WTC11 (cell line): ENCODE measurements at regions of chr19 and their contacts with region 1.

Region 1: DNA sequence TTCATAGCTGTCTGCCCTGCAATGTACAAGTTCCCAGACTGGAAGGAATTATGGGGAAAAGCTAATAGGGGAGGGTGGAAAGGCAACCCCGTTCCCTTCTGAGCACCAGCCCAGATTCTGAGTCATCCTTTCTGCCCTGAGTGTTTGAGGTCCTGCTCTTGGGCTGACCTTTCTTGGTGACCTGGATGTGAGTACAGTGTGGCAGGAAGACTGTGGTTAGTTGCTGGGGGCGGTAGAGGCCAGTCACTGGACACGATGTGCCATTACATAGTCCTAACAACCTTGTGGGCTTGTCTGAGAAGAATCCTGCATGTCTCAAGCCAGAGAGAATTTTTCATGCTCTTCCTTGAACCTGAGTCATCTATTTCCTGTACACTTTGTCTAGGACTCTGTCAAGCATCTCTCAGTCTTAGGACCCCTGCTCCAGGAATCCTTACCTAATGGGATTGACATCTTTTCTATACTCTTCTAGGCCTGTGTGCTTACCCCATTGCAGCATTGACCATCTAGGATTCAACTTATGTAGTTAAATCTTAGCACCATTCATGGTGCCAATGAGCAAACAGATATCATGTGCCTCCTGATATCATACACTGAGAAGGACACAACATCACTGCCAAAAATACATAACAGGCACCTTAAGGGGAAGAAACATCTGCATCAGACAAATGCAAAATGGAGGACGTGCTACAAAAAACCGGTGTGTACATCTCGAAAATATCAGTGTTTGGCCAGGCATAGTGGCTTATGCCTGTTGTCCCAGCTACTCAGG is 8.1 kb upstream of the ANGPTL4 start:
- DNase-seq: no peak
- ATAC-seq: no peak
- H3K4me3 Mint-ChIP-seq: no peak overlapping the region
- H3K27ac Mint-ChIP-seq: no peak overlapping the region
- H3K4me1 Mint-ChIP-seq: peaks cover 14% of the 10 kb centered on the region
- H3K27me3 Mint-ChIP-seq: peaks cover 16% of the 10 kb centered on the region
- CTCF ChIP-seq: no peak

Region 2: GRCh38 chr19:8194528-8195267 is 161.1 kb before region 1 on chr19:
- CTCF ChIA-PET with region 1: no interaction called
- POLR2A ChIA-PET with region 1: no interaction called
- DNase-seq: no peak
- ATAC-seq: 0 out of 2 replicates have a peak, but pooled peaks have one; percentile 12
- H3K4me3 Mint-ChIP-seq: no peak overlapping the region
- H3K27ac Mint-ChIP-seq: peak overlapping the region; percentile 87
- H3K4me1 Mint-ChIP-seq: peaks cover 46% of the 10 kb centered on the region
- H3K27me3 Mint-ChIP-seq: no peaks in the 10 kb centered on the region
- CTCF ChIP-seq: no peak

Region 3: DNA sequence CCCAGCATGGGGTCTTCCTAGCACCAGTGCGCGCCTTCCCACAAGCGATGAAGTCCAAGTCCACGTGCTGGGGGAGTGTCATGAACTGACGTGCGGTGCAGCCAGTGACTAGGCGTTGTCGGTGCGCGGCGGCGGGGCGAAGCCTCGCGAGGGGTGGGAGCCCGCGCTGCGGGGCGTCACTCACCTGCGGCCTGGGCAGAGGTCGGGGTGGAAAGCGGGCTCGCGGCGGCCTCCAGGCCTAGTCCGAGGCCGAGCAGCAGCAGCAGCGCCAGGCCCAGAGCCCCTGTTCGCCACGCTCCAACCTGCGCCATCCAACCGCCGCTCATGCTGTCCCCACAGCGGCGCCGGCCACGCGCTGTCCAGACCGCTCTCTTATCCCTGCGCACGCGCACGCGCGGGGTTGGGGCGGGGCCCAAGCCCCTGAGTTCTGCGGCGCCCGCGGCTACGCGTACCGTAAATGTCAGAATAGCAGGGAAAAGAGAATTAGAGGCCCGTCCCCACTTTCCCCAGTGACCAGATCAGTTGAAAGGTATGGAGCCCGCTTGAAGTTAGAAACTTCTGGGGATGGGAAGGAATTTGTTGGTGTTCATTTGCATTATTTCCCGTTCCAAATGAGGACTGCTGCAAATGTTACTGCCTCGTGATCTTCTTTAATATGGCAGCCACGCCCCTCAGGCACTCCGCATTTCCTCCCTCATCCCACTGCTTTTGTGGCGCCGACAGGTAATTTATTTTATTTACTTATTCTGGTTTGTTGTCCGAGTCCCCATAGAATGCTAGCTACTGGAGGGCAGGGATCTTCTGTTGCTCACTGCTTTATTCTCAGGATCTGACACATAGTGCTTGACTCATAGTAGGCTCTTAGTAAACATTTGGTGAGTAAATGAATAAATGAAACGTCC is 47.6 kb before region 1 on chr19 and contains the start of gene CD320:
- CTCF ChIA-PET with region 1: no interaction called
- POLR2A ChIA-PET with region 1: no interaction called
- DNase-seq: peak; percentile 87
- ATAC-seq: peak; percentile 67
- H3K4me3 Mint-ChIP-seq: peak within 1 kb of the TSS; percentile 86
- H3K27ac Mint-ChIP-seq: peak within 1 kb of the TSS; percentile 91
- H3K4me1 Mint-ChIP-seq: peaks cover 33% of the 10 kb centered on the region
- H3K27me3 Mint-ChIP-seq: no peaks in the 10 kb centered on the region
- CTCF ChIP-seq: no peak
- total RNA-seq, gene CD320: 107 to 121 TPM (median 114 TPM) in 3 replicates

Region 4: DNA sequence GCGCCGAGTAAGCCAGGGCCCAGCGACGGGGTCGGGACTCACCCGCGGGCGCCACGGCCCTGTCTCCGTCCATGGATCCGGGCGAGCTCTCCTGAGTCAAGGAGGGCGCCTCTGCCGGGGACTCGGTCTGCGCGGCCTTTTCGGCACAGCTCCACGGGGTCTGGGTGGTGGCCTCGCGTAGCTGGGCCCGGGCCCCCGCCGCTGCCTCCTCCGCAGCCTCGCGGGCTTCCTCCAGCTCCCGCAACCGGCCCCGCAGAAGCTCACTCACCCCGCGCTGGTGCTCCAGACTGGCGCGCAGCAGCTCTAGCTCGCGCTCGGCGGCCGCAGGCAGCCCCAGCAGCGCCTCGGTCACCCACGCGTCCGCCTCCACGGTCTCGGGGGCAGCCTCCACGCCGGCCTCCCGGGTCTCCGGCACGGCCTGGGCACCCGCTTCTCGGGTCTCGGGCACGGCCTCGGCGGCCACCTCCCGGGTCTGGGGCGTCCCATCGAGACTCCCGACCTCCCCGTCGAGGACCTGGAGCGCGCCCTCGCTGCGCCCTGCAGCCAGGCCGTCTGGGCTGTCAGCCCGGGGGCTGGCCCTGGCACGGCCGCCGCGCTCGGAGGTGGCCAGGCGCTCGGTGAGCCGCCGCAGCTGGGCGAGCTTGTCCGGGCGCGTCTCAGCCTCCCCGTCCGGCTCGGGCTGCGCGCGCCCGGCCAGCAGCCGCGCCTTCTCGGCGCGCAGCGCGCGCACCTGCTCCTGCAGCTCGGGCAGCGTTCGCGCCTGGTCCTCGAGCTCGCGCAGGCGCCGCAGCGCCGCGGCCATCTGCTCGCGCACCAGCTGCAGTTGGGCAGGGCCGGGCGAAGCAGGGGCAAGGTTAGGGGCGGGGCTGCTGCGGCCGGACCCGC is 21.1 kb before region 1 on chr19:
- CTCF ChIA-PET with region 1: interaction called, 40 read pairs
- POLR2A ChIA-PET with region 1: no interaction called
- DNase-seq: peak; percentile 78
- ATAC-seq: peak; percentile 53
- H3K4me3 Mint-ChIP-seq: peak overlapping the region; percentile 70
- H3K27ac Mint-ChIP-seq: no peak overlapping the region
- H3K4me1 Mint-ChIP-seq: peaks cover 19% of the 10 kb centered on the region
- H3K27me3 Mint-ChIP-seq: peaks cover 75% of the 10 kb centered on the region
- CTCF ChIP-seq: no peak

Region 5: DNA sequence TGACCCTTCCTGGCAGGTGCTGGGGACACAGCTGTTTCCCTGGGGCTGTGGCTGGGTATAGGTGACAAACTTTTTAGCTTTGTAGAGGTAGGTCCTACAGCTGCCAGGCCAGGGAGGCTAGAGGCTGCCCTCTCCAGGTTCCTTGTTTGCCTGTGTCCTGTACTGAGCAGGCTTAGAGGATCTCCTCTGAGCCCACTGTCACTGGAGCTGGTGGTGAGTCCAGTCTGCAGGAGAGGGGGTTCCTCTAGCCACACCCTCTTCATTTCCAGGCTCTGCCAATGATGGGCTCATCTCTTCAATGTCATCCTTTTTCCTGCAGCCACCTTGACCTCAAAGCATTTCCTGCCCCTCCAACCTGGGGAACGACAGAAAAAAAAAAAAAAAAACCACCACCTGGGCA is 21.8 kb after region 1 on chr19:
- CTCF ChIA-PET with region 1: interaction called, 20 read pairs
- POLR2A ChIA-PET with region 1: no interaction called
- DNase-seq: no peak
- ATAC-seq: no peak
- H3K4me3 Mint-ChIP-seq: no peak overlapping the region
- H3K27ac Mint-ChIP-seq: 0 out of 2 replicates have a peak overlapping the region, but pooled peaks have one; percentile 29
- H3K4me1 Mint-ChIP-seq: peaks cover 21% of the 10 kb centered on the region
- H3K27me3 Mint-ChIP-seq: peaks cover 2% of the 10 kb centered on the region; the same call in 1 of the 2 replicates
- CTCF ChIP-seq: no peak

Region 6: DNA sequence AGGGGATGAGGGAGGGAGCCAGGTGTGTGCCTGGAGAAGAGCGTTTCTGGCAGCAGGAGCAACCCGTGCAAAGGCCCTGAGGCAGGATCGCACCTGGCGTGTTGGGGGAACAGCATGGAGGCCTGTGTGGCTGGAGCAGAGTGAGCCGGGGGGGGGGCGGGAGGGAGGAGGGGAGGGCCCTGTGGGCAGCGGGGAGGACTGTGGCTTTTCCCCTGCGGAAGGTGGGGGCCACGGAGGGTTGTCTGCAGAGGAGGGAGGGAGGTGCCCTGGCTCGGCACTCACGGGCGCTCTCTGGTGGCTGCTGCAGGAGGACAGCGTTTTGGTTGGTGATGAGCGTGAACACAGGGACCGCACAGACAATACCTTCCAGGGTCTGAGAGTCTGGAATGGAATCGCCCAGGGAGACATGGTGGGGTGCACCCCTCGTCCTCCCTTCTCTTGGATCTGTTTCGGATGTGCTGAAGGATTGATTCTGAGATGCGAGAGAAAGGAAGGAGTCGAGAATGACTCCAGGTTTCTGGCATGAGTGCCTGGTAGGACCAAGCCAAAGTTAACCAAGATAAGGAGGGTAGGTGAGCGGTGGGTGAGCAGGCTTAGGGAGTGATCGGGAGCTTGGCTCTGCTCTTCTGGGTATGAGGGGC is 40.9 kb after region 1 on chr19:
- CTCF ChIA-PET with region 1: interaction called, 47 read pairs
- POLR2A ChIA-PET with region 1: interaction called, 3 read pairs
- DNase-seq: peak; percentile 85
- ATAC-seq: peak; percentile 90
- H3K4me3 Mint-ChIP-seq: no peak overlapping the region
- H3K27ac Mint-ChIP-seq: peak overlapping the region; percentile 90
- H3K4me1 Mint-ChIP-seq: peaks cover 12% of the 10 kb centered on the region
- H3K27me3 Mint-ChIP-seq: no peaks in the 10 kb centered on the region
- CTCF ChIP-seq: peak; percentile 26; the same call in 1 of the 2 replicates

Region 7: DNA sequence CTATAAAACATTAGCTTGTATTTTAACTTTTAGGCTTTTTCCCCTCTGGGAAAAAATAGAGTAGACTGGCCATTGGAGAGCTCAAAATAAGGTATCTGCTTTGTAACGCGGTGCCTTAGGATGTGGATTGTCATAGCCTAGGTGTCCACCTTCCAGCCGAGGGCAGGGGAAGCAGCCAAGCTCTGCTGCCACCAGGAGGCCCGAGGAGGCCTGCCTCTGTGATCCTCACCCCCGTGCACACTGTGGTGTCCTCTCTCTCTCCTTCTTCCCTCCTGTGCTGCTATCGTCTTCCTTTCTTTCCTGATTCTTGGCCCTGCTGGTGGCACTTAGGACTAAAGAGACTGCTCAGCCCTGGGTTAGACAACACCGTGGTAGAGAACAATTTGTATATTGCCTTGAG is 100.2 kb after region 1 on chr19:
- CTCF ChIA-PET with region 1: interaction called, 12 read pairs
- POLR2A ChIA-PET with region 1: no interaction called
- DNase-seq: peak; percentile 46
- ATAC-seq: peak; percentile 85
- H3K4me3 Mint-ChIP-seq: no peak overlapping the region
- H3K27ac Mint-ChIP-seq: peak overlapping the region; percentile 73
- H3K4me1 Mint-ChIP-seq: peaks cover 99% of the 10 kb centered on the region
- H3K27me3 Mint-ChIP-seq: no peaks in the 10 kb centered on the region
- CTCF ChIP-seq: no peak